RWPE1 (cell line): ENCODE measurements at regions of chr15 and their contacts with region 1.

Region 1: DNA sequence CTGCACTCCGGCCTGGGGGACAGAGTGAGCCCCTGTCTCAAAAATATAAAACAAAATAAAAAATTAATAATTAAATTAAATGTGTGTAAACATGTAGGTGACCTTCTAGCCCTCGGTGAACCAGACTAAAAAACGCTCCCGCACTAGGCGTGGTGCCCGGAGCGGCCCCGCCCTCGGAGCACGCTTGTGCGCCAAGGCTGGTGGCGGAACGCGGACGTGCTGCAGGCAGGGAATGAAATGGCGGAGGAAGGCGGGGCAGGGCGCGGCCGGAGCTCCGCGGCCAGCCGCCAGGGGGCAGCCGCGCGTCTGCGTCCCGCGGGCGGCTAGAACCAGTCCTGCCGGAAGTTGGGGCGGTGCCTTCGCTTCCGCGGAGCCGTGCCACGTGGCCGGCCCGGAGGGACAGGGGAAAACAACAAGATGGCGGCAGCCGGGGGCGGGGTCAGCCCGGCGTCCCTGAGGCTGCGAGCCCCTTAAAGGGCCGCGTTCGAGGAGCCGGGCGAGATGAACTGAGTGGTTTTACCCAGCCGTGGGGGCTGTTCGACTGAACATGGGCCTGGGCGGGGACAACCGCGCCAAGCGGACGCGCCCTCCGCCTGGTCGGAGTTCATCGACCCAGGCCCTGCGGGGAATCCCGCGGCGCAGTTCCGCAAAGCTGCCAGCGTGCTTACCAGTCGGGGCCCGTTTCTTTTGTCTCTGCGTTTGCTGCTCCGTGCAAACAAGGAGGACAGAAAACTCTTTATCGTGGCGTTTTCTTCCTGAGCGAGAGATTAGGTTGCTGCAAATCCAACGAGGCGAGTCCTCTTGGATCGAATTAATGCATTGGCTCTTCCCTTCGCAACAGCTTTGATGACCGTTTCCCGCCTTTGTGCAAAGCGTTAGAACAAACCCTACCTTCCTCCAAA is 90.9 kb upstream of the CHD2 start:
- DNase-seq: peak; percentile 94
- H3K27ac ChIP-seq: peak overlapping the region; percentile 99
- CTCF ChIP-seq: peak; percentile 100

Region 2: GRCh38 chr15:92268906-92269305 is 540.3 kb before region 1 on chr15:
- CTCF ChIA-PET with region 1: no interaction called
- POLR2A ChIA-PET with region 1: no interaction called
- DNase-seq: no peak
- H3K27ac ChIP-seq: no peak overlapping the region
- CTCF ChIP-seq: no peak

Region 3: GRCh38 chr15:92603743-92604470 is 205.3 kb before region 1 on chr15:
- CTCF ChIA-PET with region 1: no interaction called
- POLR2A ChIA-PET with region 1: no interaction called
- DNase-seq: no peak
- H3K27ac ChIP-seq: no peak overlapping the region
- CTCF ChIP-seq: no peak

Region 4: GRCh38 chr15:92820236-92821021 is 11.2 kb after region 1 on chr15:
- CTCF ChIA-PET with region 1: interaction called, 20 read pairs
- POLR2A ChIA-PET with region 1: interaction called, 6 read pairs
- DNase-seq: peak; percentile 97
- H3K27ac ChIP-seq: peak overlapping the region; percentile 81
- CTCF ChIP-seq: no peak

Region 5: GRCh38 chr15:92881802-92882696 is 72.8 kb after region 1 on chr15:
- CTCF ChIA-PET with region 1: interaction called, 8 read pairs
- POLR2A ChIA-PET with region 1: interaction called, 27 read pairs
- DNase-seq: peak; percentile 100
- H3K27ac ChIP-seq: peak overlapping the region; percentile 98
- CTCF ChIP-seq: no peak

Region 6: GRCh38 chr15:92906563-92907140 is 97.4 kb after region 1 on chr15:
- CTCF ChIA-PET with region 1: interaction called, 11 read pairs
- POLR2A ChIA-PET with region 1: interaction called, 9 read pairs
- DNase-seq: peak; percentile 62
- H3K27ac ChIP-seq: no peak overlapping the region
- CTCF ChIP-seq: no peak

Region 7: GRCh38 chr15:92917606-92918407 is 108.6 kb after region 1 on chr15:
- CTCF ChIA-PET with region 1: interaction called, 10 read pairs
- POLR2A ChIA-PET with region 1: interaction called, 5 read pairs
- DNase-seq: peak; percentile 85
- H3K27ac ChIP-seq: peak overlapping the region; percentile 91
- CTCF ChIP-seq: peak; percentile 97